Transverse colon (tissue), 4 donors: ENCODE measurements at regions of chr14 and their contacts with region 1.

Region 1: GRCh38 chr14:24058260-24058950 is 6.6 kb downstream of the CARMIL3 start:
- DNase-seq: peak; percentile 84
- H3K4me3 ChIP-seq: no peak overlapping the region
- H3K27ac ChIP-seq: no peak overlapping the region
- H3K4me1 ChIP-seq: peaks cover 0 to 18% (median 8%) of the 10 kb centered on the region in 4 donors
- H3K27me3 ChIP-seq: no peaks in the 10 kb centered on the region
- CTCF ChIP-seq: peak; percentile 76 to 97 (median 90)
- EP300 ChIP-seq: no peak
- POLR2A ChIP-seq: no peak

Region 2: GRCh38 chr14:24011051-24011450 is 47.4 kb before region 1 on chr14:
- in situ Hi-C with region 1: no loop called
- intact Hi-C with region 1: no loop called
- DNase-seq: no peak
- H3K4me3 ChIP-seq: no peak overlapping the region
- H3K27ac ChIP-seq: no peak overlapping the region
- H3K4me1 ChIP-seq: peaks cover 0 to 17% (median 9%) of the 10 kb centered on the region in 4 donors
- H3K27me3 ChIP-seq: no peaks in the 10 kb centered on the region
- CTCF ChIP-seq: no peak
- EP300 ChIP-seq: no peak
- POLR2A ChIP-seq: no peak

Region 3: GRCh38 chr14:24093901-24094761 is 35.7 kb after region 1 on chr14 and contains the start of gene PCK2:
- in situ Hi-C with region 1: loop called in 1 of 4 experiments (anchors 5 kb)
- intact Hi-C with region 1: no loop called
- DNase-seq: peak; percentile 96
- H3K4me3 ChIP-seq: peak within 1 kb of the TSS; percentile 65 to 92 (median 82)
- H3K27ac ChIP-seq: peak within 1 kb of the TSS; percentile 92 to 99 (median 97)
- H3K4me1 ChIP-seq: peaks cover 4 to 42% (median 19%) of the 10 kb centered on the region in 4 donors
- H3K27me3 ChIP-seq: no peaks in the 10 kb centered on the region
- CTCF ChIP-seq: peak in 3 of 5 experiments; percentile 25 to 45 (median 31)
- EP300 ChIP-seq: no peak
- POLR2A ChIP-seq: peak; percentile 98
- total RNA-seq, gene PCK2: 74.4 to 238 (median 130) TPM

Region 4: GRCh38 chr14:24259252-24259995 is 201.0 kb after region 1 on chr14:
- in situ Hi-C with region 1: no loop called
- intact Hi-C with region 1: no loop called
- DNase-seq: no peak
- H3K4me3 ChIP-seq: no peak overlapping the region
- H3K27ac ChIP-seq: no peak overlapping the region
- H3K4me1 ChIP-seq: no peaks in the 10 kb centered on the region
- H3K27me3 ChIP-seq: no peaks in the 10 kb centered on the region
- CTCF ChIP-seq: no peak
- EP300 ChIP-seq: no peak
- POLR2A ChIP-seq: no peak